ENCODE measurements at regions of chr12 and their contacts with region 1.

Region 1: DNA sequence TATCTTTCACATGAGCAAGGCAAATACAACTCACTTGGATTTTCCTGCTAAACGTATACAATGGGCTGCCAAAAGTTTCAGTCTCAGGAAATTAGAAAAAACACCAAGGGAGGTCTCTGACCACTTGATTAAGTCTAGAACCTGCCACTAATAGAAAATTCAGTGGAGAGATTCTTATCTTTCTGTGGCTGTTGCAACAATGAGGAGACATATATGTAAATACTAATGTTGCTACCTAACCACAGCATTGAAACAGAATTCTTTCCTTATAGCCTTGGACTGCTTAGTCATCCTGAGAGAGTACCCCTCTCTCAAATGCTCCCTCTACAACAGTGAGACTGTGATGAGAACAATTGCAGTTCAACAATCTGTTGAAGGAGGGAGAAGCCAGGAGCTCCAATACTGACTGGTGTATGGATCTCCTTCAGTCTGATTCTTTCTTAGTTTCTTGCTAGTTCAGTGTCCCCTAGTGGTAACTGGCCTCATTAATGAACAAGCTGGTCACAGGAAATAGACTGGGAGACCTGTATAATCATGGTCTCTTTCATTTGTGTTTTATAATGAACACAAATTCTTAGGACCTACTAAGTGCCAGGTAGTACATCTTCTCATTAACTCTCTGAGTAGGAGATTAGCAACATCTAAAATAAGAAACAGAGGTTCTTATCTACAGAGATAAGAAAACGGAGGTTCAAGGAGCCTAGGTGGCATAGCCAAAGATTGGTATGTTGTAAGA is 164.5 kb downstream of the SLC38A4 start:
- DNase-seq: peak; percentile 39 to 72
- H3K4me3 ChIP-seq: no peak overlapping the region
- H3K27ac ChIP-seq: peak overlapping the region; percentile 75
- H3K4me1 ChIP-seq: peaks cover 53% of the 10 kb centered on the region
- H3K27me3 ChIP-seq: no peaks in the 10 kb centered on the region
- CTCF ChIP-seq: peak; percentile 65

Region 2: GRCh38 chr12:46153268-46153872 is 507.9 kb before region 1 on chr12:
- CTCF ChIA-PET with region 1: no interaction called
- POLR2A ChIA-PET with region 1: no interaction called
- intact Hi-C with region 1: loop called (anchors 5 kb)
- DNase-seq: peak in 1 of 2 experiments; percentile 35
- H3K4me3 ChIP-seq: no peak overlapping the region
- H3K27ac ChIP-seq: no peak overlapping the region
- H3K4me1 ChIP-seq: peaks cover 19% of the 10 kb centered on the region
- H3K27me3 ChIP-seq: no peaks in the 10 kb centered on the region
- CTCF ChIP-seq: peak; percentile 77

Region 3: GRCh38 chr12:46372544-46373110 is 288.7 kb before region 1 on chr12 and contains the start of gene SLC38A2:
- CTCF ChIA-PET with region 1: no interaction called
- POLR2A ChIA-PET with region 1: interaction called, 7 read pairs
- intact Hi-C with region 1: loop called (anchors 1 kb)
- DNase-seq: peak; percentile 70 to 94
- H3K4me3 ChIP-seq: peak within 1 kb of the TSS; percentile 94
- H3K27ac ChIP-seq: peak within 1 kb of the TSS; percentile 97
- H3K4me1 ChIP-seq: peaks cover 43% of the 10 kb centered on the region
- H3K27me3 ChIP-seq: no peaks in the 10 kb centered on the region
- CTCF ChIP-seq: no peak
- total RNA-seq, gene SLC38A2: 193 and 322 TPM in 2 replicates

Region 4: GRCh38 chr12:46455648-46456352 is 205.5 kb before region 1 on chr12:
- CTCF ChIA-PET with region 1: interaction called, 3 read pairs
- POLR2A ChIA-PET with region 1: interaction called, 7 read pairs
- intact Hi-C with region 1: loop called (anchors 2 kb)
- DNase-seq: peak; percentile 78 to 100
- H3K4me3 ChIP-seq: peak overlapping the region; percentile 38; the same call in 1 of the 2 replicates
- H3K27ac ChIP-seq: peak overlapping the region; percentile 99
- H3K4me1 ChIP-seq: peaks cover 65% of the 10 kb centered on the region
- H3K27me3 ChIP-seq: no peaks in the 10 kb centered on the region
- CTCF ChIP-seq: no peak

Region 5: GRCh38 chr12:46546634-46547286 is 114.5 kb before region 1 on chr12:
- CTCF ChIA-PET with region 1: no interaction called
- POLR2A ChIA-PET with region 1: interaction called, 7 read pairs
- intact Hi-C with region 1: loop called (anchors 2 kb)
- DNase-seq: peak in 1 of 2 experiments; percentile 62
- H3K4me3 ChIP-seq: no peak overlapping the region
- H3K27ac ChIP-seq: peak overlapping the region; percentile 88
- H3K4me1 ChIP-seq: peaks cover 33% of the 10 kb centered on the region
- H3K27me3 ChIP-seq: no peaks in the 10 kb centered on the region
- CTCF ChIP-seq: no peak

Measured in PC-9 (cell line).